CD8-positive, alpha-beta T cell (primary cell): ENCODE measurements at regions of chr10 and their contacts with region 1.

Region 1: GRCh38 chr10:21516242-21517131 is 9.0 kb downstream of the SKIDA1 start:
- DNase-seq: peak in 5 of 9 experiments; percentile 43 to 78 (median 70)
- ATAC-seq: peak; percentile 66
- H3K4me3 ChIP-seq: peak overlapping the region; percentile 29 to 33
- H3K4me3 Mint-ChIP-seq: peak overlapping the region; percentile 83
- H3K27ac ChIP-seq: no peak overlapping the region
- H3K27ac Mint-ChIP-seq: no peak overlapping the region
- H3K4me1 ChIP-seq: peaks cover 38% of the 10 kb centered on the region
- H3K4me1 Mint-ChIP-seq: peaks cover 36% of the 10 kb centered on the region
- H3K27me3 ChIP-seq: peaks cover 68 to 71% of the 10 kb centered on the region in 2 experiments
- H3K27me3 Mint-ChIP-seq: peaks cover 82% of the 10 kb centered on the region
- CTCF ChIP-seq: no peak

Region 2: GRCh38 chr10:21533467-21534279 is 17.2 kb after region 1 on chr10 and contains the start of gene MLLT10:
- CTCF ChIA-PET with region 1: no interaction called
- POLR2A ChIA-PET with region 1: interaction called, 7 read pairs
- intact Hi-C with region 1: loop called in 1 of 2 experiments (anchors 1 kb)
- DNase-seq: peak; percentile 83 to 98 (median 92)
- ATAC-seq: peak; percentile 84
- H3K4me3 ChIP-seq: peak within 1 kb of the TSS; percentile 69 to 81
- H3K4me3 Mint-ChIP-seq: peak within 1 kb of the TSS; percentile 96
- H3K27ac ChIP-seq: peak within 1 kb of the TSS; percentile 64 to 75
- H3K27ac Mint-ChIP-seq: peak within 1 kb of the TSS; percentile 94
- H3K4me1 ChIP-seq: peaks cover 16% of the 10 kb centered on the region
- H3K4me1 Mint-ChIP-seq: peaks cover 29% of the 10 kb centered on the region
- H3K27me3 ChIP-seq: no peaks in the 10 kb centered on the region
- H3K27me3 Mint-ChIP-seq: no peaks in the 10 kb centered on the region
- CTCF ChIP-seq: peak; percentile 22
- total RNA-seq, gene MLLT10: 36.7 to 41.0 TPM

Region 3: GRCh38 chr10:22251751-22252223 is 735.3 kb after region 1 on chr10:
- CTCF ChIA-PET with region 1: interaction called, 3 read pairs
- POLR2A ChIA-PET with region 1: no interaction called
- intact Hi-C with region 1: loop called in 1 of 2 experiments (anchors 5 kb)
- DNase-seq: peak; percentile 25 to 82 (median 63)
- ATAC-seq: peak; percentile 59
- H3K4me3 ChIP-seq: peak overlapping the region; percentile 59 to 67
- H3K4me3 Mint-ChIP-seq: peak overlapping the region; percentile 94
- H3K27ac ChIP-seq: peak overlapping the region; percentile 77 to 85
- H3K27ac Mint-ChIP-seq: peak overlapping the region; percentile 98
- H3K4me1 ChIP-seq: peaks cover 6% of the 10 kb centered on the region
- H3K4me1 Mint-ChIP-seq: peaks cover 24% of the 10 kb centered on the region
- H3K27me3 ChIP-seq: peaks cover 9 to 10% of the 10 kb centered on the region in 2 experiments
- H3K27me3 Mint-ChIP-seq: peaks cover 30% of the 10 kb centered on the region
- CTCF ChIP-seq: no peak

Region 4: GRCh38 chr10:22340362-22341189 is 824.1 kb after region 1 on chr10:
- CTCF ChIA-PET with region 1: no interaction called
- POLR2A ChIA-PET with region 1: no interaction called
- intact Hi-C with region 1: loop called (anchors 1 to 5 kb)
- DNase-seq: peak in 6 of 9 experiments; percentile 50 to 75 (median 64)
- ATAC-seq: peak; percentile 39
- H3K4me3 ChIP-seq: peak overlapping the region; percentile 50 to 70
- H3K4me3 Mint-ChIP-seq: peak overlapping the region; percentile 87
- H3K27ac ChIP-seq: peak overlapping the region; percentile 25 to 40
- H3K27ac Mint-ChIP-seq: peak overlapping the region; percentile 84
- H3K4me1 ChIP-seq: peaks cover 18% of the 10 kb centered on the region
- H3K4me1 Mint-ChIP-seq: peaks cover 14% of the 10 kb centered on the region
- H3K27me3 ChIP-seq: peaks cover 74 to 87% of the 10 kb centered on the region in 2 experiments
- H3K27me3 Mint-ChIP-seq: peaks cover 67% of the 10 kb centered on the region
- CTCF ChIP-seq: no peak